CD8-positive, alpha-beta T cell (primary cell): ENCODE measurements at regions of chr12 and their contacts with region 1.

Region 1: DNA sequence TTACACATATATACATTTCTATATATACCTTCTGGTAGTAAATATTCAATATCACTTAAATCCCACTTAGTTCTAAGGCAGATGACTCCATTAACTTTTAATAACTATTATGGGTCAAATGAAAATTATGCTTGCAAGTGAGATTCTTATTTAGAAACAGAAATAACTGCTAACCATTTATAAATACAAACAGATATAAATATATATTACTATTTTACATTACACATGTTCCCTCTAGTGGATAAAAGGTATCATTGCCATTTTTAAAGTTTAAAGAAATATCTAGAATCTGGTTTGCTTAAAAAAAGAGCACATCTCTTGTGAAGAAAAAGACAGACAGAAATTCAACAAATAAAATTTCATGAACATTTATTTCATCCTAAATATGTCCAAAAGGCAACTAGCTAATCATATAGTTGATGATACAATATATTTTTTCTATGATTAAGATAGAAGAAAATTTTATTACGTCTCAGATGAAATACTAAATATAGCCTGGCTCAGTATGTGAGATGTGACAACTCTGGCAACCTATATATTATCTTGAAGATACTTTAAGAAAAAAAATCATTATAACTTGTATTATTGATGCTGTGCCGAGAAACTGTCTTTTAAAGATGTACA is 11.7 kb upstream of the RAD51AP1 start:
- DNase-seq: peak in 2 of 9 experiments; percentile 14 to 34
- ATAC-seq: peak; percentile 52
- H3K4me3 ChIP-seq: no peak overlapping the region
- H3K4me3 Mint-ChIP-seq: no peak overlapping the region
- H3K27ac ChIP-seq: no peak overlapping the region
- H3K27ac Mint-ChIP-seq: no peak overlapping the region
- H3K4me1 ChIP-seq: peaks cover 9% of the 10 kb centered on the region
- H3K4me1 Mint-ChIP-seq: peaks cover 5% of the 10 kb centered on the region
- H3K27me3 ChIP-seq: no peaks in the 10 kb centered on the region
- H3K27me3 Mint-ChIP-seq: no peaks in the 10 kb centered on the region
- CTCF ChIP-seq: peak; percentile 93

Region 2: DNA sequence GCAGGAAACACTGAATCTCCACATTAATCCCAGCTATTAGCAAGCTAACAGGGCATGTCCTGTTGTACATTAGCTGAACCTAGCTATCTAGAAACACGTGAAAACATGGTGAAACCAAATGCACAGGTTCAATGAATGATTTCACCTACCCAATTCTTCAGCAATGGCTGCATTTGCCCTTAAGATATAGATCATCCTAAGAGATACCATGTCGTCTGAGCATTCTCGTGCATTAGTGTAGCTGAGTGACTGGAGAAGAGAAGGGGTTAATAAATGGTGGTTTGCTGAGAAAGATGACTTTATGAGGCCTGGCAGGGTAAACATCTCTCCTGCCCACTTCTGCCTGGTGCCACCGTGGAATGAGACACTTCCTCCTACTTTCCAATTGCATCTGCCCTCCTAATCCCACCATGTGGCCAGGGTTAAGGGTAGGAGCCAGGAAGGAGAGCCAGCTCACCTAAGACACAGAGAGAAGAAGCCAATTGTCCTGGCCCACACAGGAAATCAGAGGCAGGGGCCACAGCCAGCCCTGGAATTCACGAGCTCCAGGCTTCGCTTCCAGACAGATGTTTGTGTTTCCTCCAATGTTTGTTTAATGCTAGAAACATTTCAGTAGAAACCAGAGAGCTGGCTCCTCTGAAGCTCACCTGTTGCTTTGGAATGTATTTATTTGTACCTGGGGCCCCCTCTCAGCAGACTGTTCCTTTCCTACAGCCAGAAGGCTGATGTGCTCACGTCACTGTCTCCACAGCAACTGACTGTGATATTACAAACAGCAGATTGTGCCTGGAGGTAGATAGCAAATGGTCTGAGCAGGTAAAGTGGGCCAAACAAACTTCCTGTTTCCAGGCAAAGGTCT is 527.8 kb before region 1 on chr12:
- CTCF ChIA-PET with region 1: no interaction called
- POLR2A ChIA-PET with region 1: no interaction called
- intact Hi-C with region 1: loop called in 1 of 2 experiments (anchors 10 kb)
- DNase-seq: peak in 3 of 9 experiments; percentile 32 to 56 (median 33)
- ATAC-seq: peak; percentile 69
- H3K4me3 ChIP-seq: no peak overlapping the region
- H3K4me3 Mint-ChIP-seq: no peak overlapping the region
- H3K27ac ChIP-seq: no peak overlapping the region
- H3K27ac Mint-ChIP-seq: no peak overlapping the region
- H3K4me1 ChIP-seq: peaks cover 15% of the 10 kb centered on the region
- H3K4me1 Mint-ChIP-seq: peaks cover 24% of the 10 kb centered on the region
- H3K27me3 ChIP-seq: no peaks in the 10 kb centered on the region
- H3K27me3 Mint-ChIP-seq: no peaks in the 10 kb centered on the region
- CTCF ChIP-seq: no peak

Region 3: GRCh38 chr12:4379405-4379804 is 147.6 kb before region 1 on chr12 and contains the start of gene FGF23:
- CTCF ChIA-PET with region 1: no interaction called
- POLR2A ChIA-PET with region 1: no interaction called
- intact Hi-C with region 1: no loop called
- DNase-seq: no peak
- ATAC-seq: no peak
- H3K4me3 ChIP-seq: no peak within 1 kb of the TSS
- H3K4me3 Mint-ChIP-seq: no peak within 1 kb of the TSS
- H3K27ac ChIP-seq: no peak within 1 kb of the TSS
- H3K27ac Mint-ChIP-seq: no peak within 1 kb of the TSS
- H3K4me1 ChIP-seq: no peaks in the 10 kb centered on the region
- H3K4me1 Mint-ChIP-seq: no peaks in the 10 kb centered on the region
- H3K27me3 ChIP-seq: no peaks in the 10 kb centered on the region
- H3K27me3 Mint-ChIP-seq: peaks cover 15% of the 10 kb centered on the region
- CTCF ChIP-seq: no peak
- total RNA-seq, gene FGF23: not detected

Region 4: DNA sequence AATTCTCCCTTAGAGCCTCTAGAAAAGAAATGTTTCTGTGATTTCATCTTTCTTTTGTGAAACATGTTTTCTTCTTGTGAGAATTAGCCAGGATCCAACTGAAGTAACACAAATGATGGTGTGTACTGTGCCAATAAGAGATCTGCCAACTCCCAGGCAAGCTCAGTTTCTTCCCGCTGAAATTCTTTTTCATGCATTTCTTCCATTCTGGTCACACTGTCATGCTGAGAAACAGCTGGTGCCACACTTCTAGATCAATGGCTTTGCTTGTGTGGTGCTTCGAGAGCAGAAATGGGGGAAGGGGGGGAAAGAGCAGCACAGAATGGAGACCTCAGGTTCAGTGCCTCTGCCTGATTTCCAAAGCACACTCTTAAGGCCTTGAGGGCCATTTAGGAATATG is 40.1 kb before region 1 on chr12:
- CTCF ChIA-PET with region 1: no interaction called
- POLR2A ChIA-PET with region 1: no interaction called
- intact Hi-C with region 1: loop called in 1 of 2 experiments (anchors 5 kb)
- DNase-seq: no peak
- ATAC-seq: no peak
- H3K4me3 ChIP-seq: no peak overlapping the region
- H3K4me3 Mint-ChIP-seq: no peak overlapping the region
- H3K27ac ChIP-seq: no peak overlapping the region
- H3K27ac Mint-ChIP-seq: no peak overlapping the region
- H3K4me1 ChIP-seq: no peaks in the 10 kb centered on the region
- H3K4me1 Mint-ChIP-seq: no peaks in the 10 kb centered on the region
- H3K27me3 ChIP-seq: no peaks in the 10 kb centered on the region
- H3K27me3 Mint-ChIP-seq: no peaks in the 10 kb centered on the region
- CTCF ChIP-seq: no peak

Region 5: GRCh38 chr12:4506870-4507269 is 20.2 kb before region 1 on chr12:
- CTCF ChIA-PET with region 1: no interaction called
- POLR2A ChIA-PET with region 1: no interaction called
- intact Hi-C with region 1: loop called in 1 of 2 experiments (anchors 2 kb)
- DNase-seq: peak in 2 of 9 experiments; percentile 56 to 77
- ATAC-seq: peak; percentile 98
- H3K4me3 ChIP-seq: no peak overlapping the region
- H3K4me3 Mint-ChIP-seq: peak overlapping the region; percentile 38
- H3K27ac ChIP-seq: peak overlapping the region; percentile 0 to 16
- H3K27ac Mint-ChIP-seq: peak overlapping the region; percentile 85
- H3K4me1 ChIP-seq: peaks cover 16% of the 10 kb centered on the region
- H3K4me1 Mint-ChIP-seq: peaks cover 27% of the 10 kb centered on the region
- H3K27me3 ChIP-seq: no peaks in the 10 kb centered on the region
- H3K27me3 Mint-ChIP-seq: no peaks in the 10 kb centered on the region
- CTCF ChIP-seq: no peak

Region 6: DNA sequence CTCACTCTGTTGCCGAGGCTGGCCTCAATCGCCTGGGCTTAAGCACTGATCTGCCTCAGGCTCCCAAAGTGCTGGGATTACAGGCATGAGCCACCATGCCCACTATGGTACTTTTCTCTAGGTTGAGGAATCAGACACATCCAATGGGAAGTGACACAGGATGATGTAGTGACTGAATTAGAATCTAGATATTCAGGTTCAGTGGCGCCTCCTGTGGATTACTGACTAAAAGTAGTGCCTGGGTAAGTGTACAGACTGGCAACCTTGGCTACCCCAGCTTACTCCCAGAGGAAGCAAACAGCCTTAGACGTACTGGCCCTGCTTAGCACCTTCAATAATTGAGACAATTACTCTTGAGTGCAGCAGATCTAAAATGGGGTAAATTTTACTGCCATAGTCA is 216.0 kb after region 1 on chr12:
- CTCF ChIA-PET with region 1: no interaction called
- POLR2A ChIA-PET with region 1: no interaction called
- intact Hi-C with region 1: no loop called
- DNase-seq: no peak
- ATAC-seq: no peak
- H3K4me3 ChIP-seq: no peak overlapping the region
- H3K4me3 Mint-ChIP-seq: no peak overlapping the region
- H3K27ac ChIP-seq: no peak overlapping the region
- H3K27ac Mint-ChIP-seq: no peak overlapping the region
- H3K4me1 ChIP-seq: no peaks in the 10 kb centered on the region
- H3K4me1 Mint-ChIP-seq: no peaks in the 10 kb centered on the region
- H3K27me3 ChIP-seq: no peaks in the 10 kb centered on the region
- H3K27me3 Mint-ChIP-seq: peaks cover 9% of the 10 kb centered on the region
- CTCF ChIP-seq: no peak